CD4-positive, alpha-beta T cell (primary cell): ENCODE measurements at regions of chr15 and their contacts with region 1.

Region 1: GRCh38 chr15:98568382-98569017 is 79.8 kb upstream of the IGF1R start:
- DNase-seq: no peak
- ATAC-seq: no peak
- H3K4me3 ChIP-seq: no peak overlapping the region
- H3K4me3 Mint-ChIP-seq: no peak overlapping the region
- H3K27ac ChIP-seq: no peak overlapping the region
- H3K27ac Mint-ChIP-seq: no peak overlapping the region
- H3K4me1 ChIP-seq: no peaks in the 10 kb centered on the region
- H3K4me1 Mint-ChIP-seq: no peaks in the 10 kb centered on the region
- H3K27me3 ChIP-seq: peaks cover 0 to 8% of the 10 kb centered on the region in 2 experiments
- H3K27me3 Mint-ChIP-seq: peaks cover 30% of the 10 kb centered on the region
- CTCF ChIP-seq: no peak

Region 2: GRCh38 chr15:98142572-98142971 is 425.9 kb before region 1 on chr15:
- CTCF ChIA-PET with region 1: no interaction called
- POLR2A ChIA-PET with region 1: no interaction called
- intact Hi-C with region 1: loop called in 1 of 2 experiments (anchors 10 kb)
- DNase-seq: no peak
- ATAC-seq: no peak
- H3K4me3 ChIP-seq: no peak overlapping the region
- H3K4me3 Mint-ChIP-seq: no peak overlapping the region
- H3K27ac ChIP-seq: no peak overlapping the region
- H3K27ac Mint-ChIP-seq: no peak overlapping the region
- H3K4me1 ChIP-seq: no peaks in the 10 kb centered on the region
- H3K4me1 Mint-ChIP-seq: peaks cover 10% of the 10 kb centered on the region
- H3K27me3 ChIP-seq: no peaks in the 10 kb centered on the region
- H3K27me3 Mint-ChIP-seq: no peaks in the 10 kb centered on the region
- CTCF ChIP-seq: no peak